Endothelial cell of umbilical vein (primary cell): ENCODE measurements at regions of chr6 and their contacts with region 1.

Region 1: GRCh38 chr6:3231247-3232016 is 4.0 kb upstream of the TUBB2B start:
- DNase-seq: peak; percentile 46
- H3K4me3 ChIP-seq: peak overlapping the region; percentile 42 to 64 (median 45)
- H3K27ac ChIP-seq: no peak overlapping the region
- H3K4me1 ChIP-seq: peaks cover 23% of the 10 kb centered on the region
- H3K27me3 ChIP-seq: peaks cover 72 to 86% of the 10 kb centered on the region in 2 experiments
- CTCF ChIP-seq: no peak
- POLR2A ChIP-seq: no peak

Region 2: GRCh38 chr6:2783188-2783963 is 448.1 kb before region 1 on chr6:
- CTCF ChIA-PET with region 1: no interaction called
- POLR2A ChIA-PET with region 1: no interaction called
- dilution Hi-C with region 1: no loop called
- intact Hi-C with region 1: loop called (anchors 5 kb)
- DNase-seq: peak; percentile 94
- H3K4me3 ChIP-seq: peak overlapping the region in 1 of 3 experiments; percentile 8
- H3K27ac ChIP-seq: peak overlapping the region; percentile 73
- H3K4me1 ChIP-seq: peaks cover 23% of the 10 kb centered on the region
- H3K27me3 ChIP-seq: no peaks in the 10 kb centered on the region
- CTCF ChIP-seq: peak in 1 of 2 donors; percentile 35
- POLR2A ChIP-seq: no peak

Region 3: GRCh38 chr6:2988426-2989331 is 242.8 kb before region 1 on chr6:
- CTCF ChIA-PET with region 1: no interaction called
- POLR2A ChIA-PET with region 1: no interaction called
- dilution Hi-C with region 1: no loop called
- intact Hi-C with region 1: no loop called
- DNase-seq: peak; percentile 98
- H3K4me3 ChIP-seq: peak overlapping the region; percentile 53 to 78 (median 68)
- H3K27ac ChIP-seq: peak overlapping the region; percentile 84
- H3K4me1 ChIP-seq: peaks cover 15% of the 10 kb centered on the region
- H3K27me3 ChIP-seq: no peaks in the 10 kb centered on the region
- CTCF ChIP-seq: peak; percentile 80 to 82
- POLR2A ChIP-seq: peak; percentile 93

Region 4: DNA sequence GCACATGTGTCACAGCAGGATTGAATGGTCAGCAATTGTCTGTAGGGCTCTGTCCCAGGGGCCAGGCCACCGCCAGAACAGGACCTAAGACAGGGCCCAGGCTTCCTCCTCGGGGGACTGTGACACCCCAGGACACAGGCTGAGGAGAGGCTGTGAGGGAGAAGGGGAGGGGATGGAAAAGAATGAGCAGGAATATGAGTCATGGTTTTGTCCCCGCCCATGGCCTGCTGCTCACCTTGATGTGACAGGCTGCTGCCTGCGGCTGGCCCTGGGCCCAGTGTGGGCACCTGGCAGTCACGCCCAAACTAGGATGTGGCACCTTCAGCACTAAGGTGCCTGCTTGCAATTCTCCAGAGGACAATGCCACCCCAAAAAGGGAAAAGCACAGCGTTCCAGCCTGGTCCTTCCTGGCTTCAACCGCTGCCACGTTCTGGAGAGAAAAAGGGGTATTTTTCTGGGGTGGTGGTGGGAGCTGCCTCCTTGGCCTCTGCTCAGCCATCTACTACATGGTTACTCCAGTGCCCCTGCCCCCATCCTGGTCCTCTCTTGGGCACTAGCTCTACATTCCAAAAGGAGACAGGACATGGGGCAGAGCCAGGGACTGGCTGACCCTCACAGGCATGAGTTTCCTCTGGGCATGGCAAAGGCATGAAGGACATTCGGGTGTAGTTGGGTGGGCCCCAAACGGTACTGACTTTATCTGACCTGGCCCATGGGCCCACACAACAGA is 132.0 kb after region 1 on chr6:
- CTCF ChIA-PET with region 1: no interaction called
- POLR2A ChIA-PET with region 1: no interaction called
- dilution Hi-C with region 1: no loop called
- intact Hi-C with region 1: no loop called
- DNase-seq: no peak
- H3K4me3 ChIP-seq: no peak overlapping the region
- H3K27ac ChIP-seq: no peak overlapping the region
- H3K4me1 ChIP-seq: no peaks in the 10 kb centered on the region
- H3K27me3 ChIP-seq: no peaks in the 10 kb centered on the region
- CTCF ChIP-seq: no peak
- POLR2A ChIP-seq: no peak